A673 (cell line): ENCODE measurements at regions of chr13 and their contacts with region 1.

Region 1: DNA sequence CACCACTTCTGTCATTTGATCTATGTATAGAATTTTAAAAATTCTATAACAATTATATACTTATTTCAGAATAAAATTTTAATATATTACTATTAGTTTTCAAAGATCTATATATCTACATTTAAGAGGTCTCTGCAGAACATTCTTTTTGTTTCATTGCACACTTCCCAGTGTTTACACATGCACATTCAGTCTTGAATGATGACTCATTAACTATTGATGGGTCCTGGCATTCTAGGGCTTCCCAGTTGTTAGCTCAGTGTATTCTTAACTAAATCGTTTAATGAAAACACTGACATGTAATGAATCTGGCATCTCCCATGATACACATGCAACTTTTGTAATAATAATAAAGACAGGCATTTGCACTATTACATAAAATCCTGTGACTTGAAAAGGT is 324.6 kb downstream of the KLF12 start:
- DNase-seq: peak; percentile 33
- H3K4me3 ChIP-seq: no peak overlapping the region
- H3K27ac ChIP-seq: no peak overlapping the region
- H3K4me1 ChIP-seq: peaks cover 44% of the 10 kb centered on the region
- H3K27me3 ChIP-seq: no peaks in the 10 kb centered on the region
- CTCF ChIP-seq: no peak

Region 2: GRCh38 chr13:74464670-74465069 is 655.1 kb after region 1 on chr13:
- CTCF ChIA-PET with region 1: no interaction called
- POLR2A ChIA-PET with region 1: no interaction called
- intact Hi-C with region 1: loop called (anchors 10 kb)
- DNase-seq: peak; percentile 92
- H3K4me3 ChIP-seq: no peak overlapping the region
- H3K27ac ChIP-seq: peak overlapping the region; percentile 74
- H3K4me1 ChIP-seq: peaks cover 47% of the 10 kb centered on the region
- H3K27me3 ChIP-seq: no peaks in the 10 kb centered on the region
- CTCF ChIP-seq: no peak